Heart right ventricle (tissue), 16 donors: ENCODE measurements at regions of chr6 and their contacts with region 1.

Region 1: DNA sequence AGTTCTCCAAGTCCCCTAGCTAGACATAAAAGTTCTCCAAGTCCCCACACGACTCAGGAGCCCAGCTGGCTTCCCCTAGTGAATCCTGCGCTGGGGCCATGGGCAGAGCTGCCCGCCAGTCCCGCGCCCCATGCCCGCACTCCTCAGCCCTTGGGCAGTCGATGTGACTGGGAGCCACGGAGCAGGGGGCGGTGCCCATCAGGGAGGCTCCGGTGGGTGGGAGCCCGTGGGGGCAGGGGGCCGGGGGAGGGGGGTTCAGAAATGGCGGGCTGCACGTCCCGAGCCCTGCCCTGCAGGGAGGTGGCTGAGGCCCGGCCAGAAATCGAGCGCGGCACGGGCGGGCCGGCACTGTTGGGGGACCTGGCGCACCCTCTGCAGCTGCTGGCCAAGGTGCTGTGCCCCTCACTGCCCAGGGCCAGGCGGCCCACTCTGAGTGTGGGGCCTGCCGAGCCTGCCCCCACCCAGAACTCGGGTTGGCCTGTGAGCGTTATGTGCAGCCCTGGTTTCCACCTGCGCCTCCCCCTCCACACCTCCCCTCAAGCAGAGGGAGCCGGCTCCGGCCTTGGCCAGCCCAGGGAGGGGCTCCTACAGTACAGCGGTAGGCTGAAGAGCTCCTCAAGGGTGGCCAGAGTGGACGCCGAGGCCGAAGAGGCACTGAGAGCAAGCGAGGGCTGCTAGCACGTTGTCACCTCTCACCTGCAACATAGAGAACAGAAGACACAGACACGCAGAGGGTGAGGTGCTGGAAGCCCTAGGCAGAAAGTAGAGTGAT is 11.4 kb downstream of the GSTA5 start:
- DNase-seq: no peak
- ATAC-seq: peak in 1 of 8 donors; percentile 34
- H3K4me3 ChIP-seq: no peak overlapping the region
- H3K27ac ChIP-seq: no peak overlapping the region
- H3K4me1 ChIP-seq: no peaks in the 10 kb centered on the region
- H3K27me3 ChIP-seq: no peaks in the 10 kb centered on the region
- CTCF ChIP-seq: no peak

Region 2: GRCh38 chr6:52788478-52788877 is 40.8 kb before region 1 on chr6:
- intact Hi-C with region 1: loop called in 3 of 10 experiments (anchors 5 kb)
- DNase-seq: no peak
- ATAC-seq: no peak
- H3K4me3 ChIP-seq: no peak overlapping the region
- H3K27ac ChIP-seq: no peak overlapping the region
- H3K4me1 ChIP-seq: no peaks in the 10 kb centered on the region
- H3K27me3 ChIP-seq: peaks cover 0 to 4% (median 0%) of the 10 kb centered on the region in 7 donors
- CTCF ChIP-seq: no peak

Region 3: DNA sequence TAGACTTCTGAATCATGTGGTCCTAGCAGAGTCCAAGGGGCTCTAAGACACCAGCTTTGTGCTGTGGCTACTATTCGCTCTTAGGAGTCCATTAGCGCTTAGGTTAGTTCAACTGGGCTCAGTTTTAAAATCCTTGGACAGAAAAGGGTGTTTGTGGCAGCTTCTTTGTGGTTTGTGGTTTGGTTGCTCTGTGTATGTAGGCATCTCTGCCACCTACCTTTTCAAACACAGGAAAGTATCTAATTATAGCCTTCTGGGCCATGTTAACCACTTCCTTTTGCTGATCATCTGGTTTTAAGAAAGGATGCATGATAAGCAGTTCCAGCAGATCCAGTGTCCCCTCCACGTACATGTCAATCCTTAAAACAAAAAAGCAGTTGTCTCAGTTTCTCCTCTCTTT is 155.0 kb after region 1 on chr6:
- intact Hi-C with region 1: no loop called
- DNase-seq: no peak
- ATAC-seq: no peak
- H3K4me3 ChIP-seq: no peak overlapping the region
- H3K27ac ChIP-seq: no peak overlapping the region
- H3K4me1 ChIP-seq: peaks cover 0 to 17% (median 0%) of the 10 kb centered on the region in 9 donors
- H3K27me3 ChIP-seq: no peaks in the 10 kb centered on the region
- CTCF ChIP-seq: no peak